PC-3 (cell line): ENCODE measurements at regions of chr1 and their contacts with region 1.

Region 1: GRCh38 chr1:235843461-235843961 is 23.2 kb downstream of the LYST start:
- DNase-seq: peak; percentile 71
- ATAC-seq: peak; percentile 99
- H3K4me3 ChIP-seq: no peak overlapping the region
- H3K27ac ChIP-seq: no peak overlapping the region
- H3K4me1 ChIP-seq: no peaks in the 10 kb centered on the region
- H3K27me3 ChIP-seq: no peaks in the 10 kb centered on the region
- CTCF ChIP-seq: peak; percentile 68

Region 2: DNA sequence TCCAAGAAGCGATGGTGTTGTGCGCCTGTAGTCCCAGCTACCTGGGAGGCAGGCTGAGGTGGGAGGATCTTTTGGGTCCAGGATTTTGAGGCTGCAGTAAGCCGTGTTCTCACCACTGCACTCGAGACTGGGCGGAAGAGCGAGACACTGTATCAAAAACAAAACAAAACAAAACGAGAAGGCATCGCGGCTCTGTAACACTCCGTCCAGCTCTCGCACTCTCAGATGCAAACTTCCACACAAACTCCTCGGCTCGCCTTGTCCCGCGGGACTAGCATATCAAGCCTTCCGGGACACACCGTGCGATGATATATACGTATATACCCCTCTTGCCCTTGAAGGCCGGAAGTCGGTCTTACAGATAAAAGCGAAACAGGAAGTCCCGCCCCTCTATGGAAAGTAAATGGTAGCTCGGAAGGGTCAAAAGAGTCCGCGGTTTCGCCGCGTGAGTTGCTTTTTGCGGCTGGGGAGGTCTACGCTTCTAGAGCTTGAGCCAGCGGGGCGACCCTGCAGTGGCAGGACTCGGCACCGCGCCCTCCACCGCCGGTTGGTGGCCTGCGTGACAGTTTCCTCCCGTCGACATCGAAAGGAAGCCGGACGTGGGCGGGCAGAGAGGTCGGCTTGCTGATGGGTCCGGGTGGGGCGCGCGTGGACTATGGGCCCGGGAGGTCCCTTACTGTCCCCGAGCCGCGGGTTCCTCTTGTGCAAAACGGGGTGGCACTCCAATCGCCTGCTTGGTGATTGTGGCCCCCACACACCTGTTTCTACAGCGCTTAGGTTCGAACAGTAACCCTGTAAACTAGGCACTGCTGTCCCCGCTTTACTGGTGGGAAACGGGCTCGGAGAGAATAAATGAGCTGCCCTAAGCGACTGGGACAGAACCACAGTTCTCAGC is 1470.2 kb before region 1 on chr1 and contains the start of gene COA6:
- CTCF ChIA-PET with region 1: no interaction called
- POLR2A ChIA-PET with region 1: interaction called, 11 read pairs
- intact Hi-C with region 1: no loop called
- DNase-seq: peak; percentile 91
- ATAC-seq: peak; percentile 90
- H3K4me3 ChIP-seq: peak within 1 kb of the TSS; percentile 97
- H3K27ac ChIP-seq: peak within 1 kb of the TSS; percentile 96
- H3K4me1 ChIP-seq: peaks cover 19% of the 10 kb centered on the region
- H3K27me3 ChIP-seq: no peaks in the 10 kb centered on the region
- CTCF ChIP-seq: no peak
- total RNA-seq, gene COA6: 28.9 and 43.1 TPM in 2 replicates

Region 3: DNA sequence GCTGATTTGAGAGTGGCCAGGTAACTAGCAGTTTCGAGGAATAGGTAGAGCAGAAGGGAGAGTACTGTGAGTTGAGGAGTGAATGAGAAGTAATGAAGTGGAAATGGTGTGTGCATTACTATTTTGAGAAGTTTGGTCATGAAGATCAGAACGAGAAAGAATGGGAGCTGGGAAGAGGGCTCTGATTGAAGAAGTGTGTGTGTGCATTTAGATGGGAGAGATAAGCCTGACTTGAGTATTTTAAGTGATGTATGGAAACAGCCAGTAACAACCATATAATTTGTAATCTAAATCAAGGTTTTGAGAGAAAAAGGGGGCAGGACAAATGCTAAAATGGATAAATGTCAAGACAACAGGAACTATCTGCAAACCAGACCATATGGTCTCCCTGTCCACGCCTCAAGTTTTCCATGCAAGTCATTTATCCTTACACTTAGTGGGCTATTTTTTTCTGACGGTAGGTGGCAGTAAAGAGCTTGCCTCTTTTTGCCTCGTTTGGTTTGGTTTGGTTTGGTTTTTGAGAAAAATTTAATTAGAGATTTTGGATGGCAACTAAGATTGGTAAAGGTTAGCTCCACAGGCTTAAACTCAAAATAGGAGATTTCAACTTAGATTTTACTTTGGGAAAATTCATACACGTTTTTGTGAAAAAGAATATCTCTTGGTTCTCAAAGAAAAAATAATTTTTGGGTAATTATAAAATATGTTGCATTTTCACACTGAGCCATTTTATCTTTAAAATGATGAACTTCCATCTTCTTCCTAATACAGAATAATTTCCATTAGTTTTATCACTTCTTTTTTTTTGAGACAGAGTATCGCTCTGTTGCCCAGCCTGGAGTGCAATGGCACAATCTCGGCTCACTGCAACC is 329.8 kb before region 1 on chr1:
- CTCF ChIA-PET with region 1: no interaction called
- POLR2A ChIA-PET with region 1: no interaction called
- intact Hi-C with region 1: loop called (anchors 5 kb)
- DNase-seq: peak; percentile 75
- ATAC-seq: peak; percentile 67
- H3K4me3 ChIP-seq: no peak overlapping the region
- H3K27ac ChIP-seq: no peak overlapping the region
- H3K4me1 ChIP-seq: no peaks in the 10 kb centered on the region
- H3K27me3 ChIP-seq: no peaks in the 10 kb centered on the region
- CTCF ChIP-seq: peak; percentile 79

Region 4: DNA sequence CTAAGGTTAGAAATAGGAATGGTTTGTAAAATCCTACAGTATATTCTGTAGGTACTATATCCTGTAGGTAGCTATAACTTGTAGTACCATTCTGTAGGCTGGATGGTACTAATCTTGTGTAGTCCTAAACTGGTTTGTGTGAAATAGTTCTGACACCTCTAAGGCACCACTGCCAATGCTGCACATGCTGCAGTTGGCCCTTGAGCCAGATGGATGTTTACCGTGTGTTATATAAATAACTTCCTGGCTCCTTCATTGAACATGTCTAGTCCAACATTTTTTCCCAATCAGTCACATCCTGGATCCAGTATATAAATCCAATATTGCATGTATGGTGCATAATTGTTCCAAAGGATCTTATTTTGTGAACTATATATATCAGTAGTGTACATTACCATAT is 104.4 kb before region 1 on chr1:
- CTCF ChIA-PET with region 1: no interaction called
- POLR2A ChIA-PET with region 1: interaction called, 12 read pairs
- intact Hi-C with region 1: no loop called
- DNase-seq: peak; percentile 74
- ATAC-seq: peak; percentile 84
- H3K4me3 ChIP-seq: no peak overlapping the region
- H3K27ac ChIP-seq: 0 out of 2 replicates have a peak overlapping the region, but pooled peaks have one; percentile 8
- H3K4me1 ChIP-seq: peaks cover 13% of the 10 kb centered on the region
- H3K27me3 ChIP-seq: no peaks in the 10 kb centered on the region
- CTCF ChIP-seq: no peak

Region 5: DNA sequence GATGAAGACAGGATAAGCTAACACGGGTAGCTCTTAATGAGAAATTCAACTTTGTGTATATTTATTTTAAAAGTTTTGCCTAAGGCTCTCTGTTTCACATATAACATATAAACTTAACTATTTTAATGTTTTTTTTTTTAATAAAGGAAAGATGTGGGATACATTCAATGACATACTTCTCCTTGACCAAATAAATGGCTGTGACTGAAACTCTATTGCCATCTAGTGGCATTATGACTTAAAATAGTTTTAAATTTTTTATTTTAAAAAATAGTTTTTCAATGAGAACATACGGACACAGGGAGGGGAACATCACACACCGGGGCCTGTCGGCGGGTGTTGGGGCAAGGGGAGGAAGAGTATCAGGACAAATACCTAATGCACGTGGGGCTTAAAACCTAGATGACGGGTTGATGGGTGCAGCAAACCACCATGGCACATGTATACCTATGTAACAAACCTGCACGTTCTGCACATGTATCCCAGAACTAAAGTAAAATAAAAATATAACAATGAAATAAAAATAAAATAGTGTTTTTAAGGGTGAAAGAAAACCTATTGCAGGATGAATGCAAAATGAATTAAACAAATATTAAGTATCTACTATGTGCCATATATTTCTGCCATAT is 60.2 kb before region 1 on chr1:
- CTCF ChIA-PET with region 1: interaction called, 3 read pairs
- POLR2A ChIA-PET with region 1: no interaction called
- intact Hi-C with region 1: loop called (anchors 1 kb)
- DNase-seq: peak; percentile 66
- ATAC-seq: peak; percentile 22; the same call in 1 of the 2 replicates
- H3K4me3 ChIP-seq: no peak overlapping the region
- H3K27ac ChIP-seq: no peak overlapping the region
- H3K4me1 ChIP-seq: peaks cover 5% of the 10 kb centered on the region
- H3K27me3 ChIP-seq: no peaks in the 10 kb centered on the region
- CTCF ChIP-seq: no peak; the same call in 1 of the 2 replicates

Region 6: DNA sequence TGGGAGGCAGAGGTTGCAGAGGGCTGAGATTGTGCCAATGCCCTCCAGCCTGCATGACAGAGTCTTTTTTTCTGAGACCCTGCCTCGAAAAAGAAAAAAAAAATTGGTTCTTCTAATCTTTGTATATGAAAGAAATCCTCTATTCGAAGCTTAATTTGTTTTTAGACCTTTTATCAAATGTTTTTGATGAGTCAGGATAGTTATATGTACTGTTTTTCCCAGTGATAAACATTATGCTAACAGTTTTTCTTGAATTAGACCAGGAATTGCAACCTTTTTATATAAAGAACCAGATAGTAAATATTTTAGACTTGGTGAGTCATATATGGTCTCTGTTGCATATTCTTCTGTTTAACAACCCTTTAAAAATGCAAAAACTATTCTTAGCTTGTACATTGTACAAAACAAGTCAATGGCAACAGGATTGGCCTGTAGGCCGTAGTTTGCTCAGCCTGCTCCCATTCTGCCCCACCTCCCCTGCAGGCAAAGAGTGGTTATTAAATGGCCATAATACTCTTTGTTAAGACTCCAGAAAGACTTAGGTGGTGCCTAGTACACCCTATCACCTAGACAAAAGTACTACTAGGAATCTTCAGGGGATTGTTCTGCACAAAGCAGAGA is 22.0 kb before region 1 on chr1:
- CTCF ChIA-PET with region 1: interaction called, 5 read pairs
- POLR2A ChIA-PET with region 1: no interaction called
- intact Hi-C with region 1: loop called (anchors 1 kb)
- DNase-seq: peak; percentile 58
- ATAC-seq: peak; percentile 92
- H3K4me3 ChIP-seq: no peak overlapping the region
- H3K27ac ChIP-seq: peak overlapping the region; percentile 59
- H3K4me1 ChIP-seq: peaks cover 26% of the 10 kb centered on the region
- H3K27me3 ChIP-seq: no peaks in the 10 kb centered on the region
- CTCF ChIP-seq: no peak